Prostate gland (tissue), 2 donors: ENCODE measurements at regions of chr14 and their contacts with region 1.

Region 1: DNA sequence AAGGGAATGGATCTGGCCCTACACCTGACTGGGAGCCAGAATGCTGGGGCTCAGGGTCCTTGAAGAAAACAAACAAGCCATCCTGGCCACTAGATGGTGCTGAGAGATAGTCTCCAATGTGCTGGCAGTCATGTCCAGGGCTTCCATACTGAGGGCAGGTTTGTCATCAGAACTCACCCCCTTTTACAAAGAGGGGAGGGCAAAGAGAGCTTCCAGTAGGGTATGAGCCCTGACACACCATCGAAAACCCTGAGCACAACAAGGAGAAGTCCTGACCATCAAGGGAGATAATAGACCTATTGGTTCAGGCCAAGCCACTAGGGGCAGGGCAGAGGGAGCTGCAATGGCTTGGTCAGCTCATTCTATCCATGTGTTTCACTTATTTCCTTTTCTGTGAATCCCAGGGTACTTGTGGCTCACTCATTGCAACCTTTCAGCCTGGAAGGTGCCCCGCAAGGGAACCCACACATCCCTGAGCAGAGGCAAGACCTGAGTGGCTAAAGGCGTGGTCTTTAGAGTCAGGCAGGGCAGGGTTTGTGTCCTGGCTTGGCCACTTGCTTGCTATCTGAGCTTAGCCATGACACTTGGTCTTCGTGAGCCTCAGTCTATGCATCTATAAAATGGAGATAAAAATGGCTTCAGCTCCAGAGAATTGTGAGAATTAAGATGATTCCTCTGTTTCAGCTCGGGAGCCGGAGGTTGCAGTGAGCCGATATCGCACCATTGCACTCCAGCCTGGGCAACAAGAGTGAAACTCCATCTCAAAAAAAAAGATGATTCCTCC is 6.2 kb upstream of the PLEKHH1 start:
- DNase-seq: peak; percentile 39
- H3K4me3 ChIP-seq: no peak overlapping the region
- H3K27ac ChIP-seq: no peak overlapping the region
- H3K4me1 ChIP-seq: peaks cover 5% of the 10 kb centered on the region
- H3K27me3 ChIP-seq: no peaks in the 10 kb centered on the region
- CTCF ChIP-seq: peak; percentile 26 to 69 (median 62)
- POLR2A ChIP-seq: no peak

Region 2: DNA sequence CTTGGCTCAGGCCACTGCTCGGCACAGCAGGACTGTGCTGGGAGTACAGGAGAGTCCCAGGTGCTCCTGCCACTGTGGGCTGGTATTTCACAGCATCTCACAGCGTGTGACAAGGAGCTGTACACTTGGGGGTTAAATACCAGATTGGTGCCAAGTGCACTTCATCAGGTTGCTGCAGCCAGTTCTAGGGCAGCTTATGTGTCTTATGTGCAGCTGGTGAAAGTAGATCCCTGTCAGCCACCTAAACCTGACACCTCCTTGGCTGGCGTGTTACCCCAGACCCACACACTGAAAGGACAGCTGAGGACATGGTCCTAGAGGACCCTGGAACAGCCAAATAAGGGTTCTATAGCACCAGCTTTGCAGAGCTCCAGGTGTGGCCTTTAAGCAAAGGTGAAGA is 25.1 kb after region 1 on chr14:
- intact Hi-C with region 1: no loop called
- DNase-seq: no peak
- H3K4me3 ChIP-seq: no peak overlapping the region
- H3K27ac ChIP-seq: no peak overlapping the region
- H3K4me1 ChIP-seq: peaks cover 13% of the 10 kb centered on the region
- H3K27me3 ChIP-seq: no peaks in the 10 kb centered on the region
- CTCF ChIP-seq: no peak
- POLR2A ChIP-seq: no peak

Region 3: GRCh38 chr14:67571272-67571850 is 44.5 kb after region 1 on chr14:
- intact Hi-C with region 1: loop called (anchors 2 kb)
- DNase-seq: peak; percentile 64
- H3K4me3 ChIP-seq: no peak overlapping the region
- H3K27ac ChIP-seq: no peak overlapping the region
- H3K4me1 ChIP-seq: no peaks in the 10 kb centered on the region
- H3K27me3 ChIP-seq: no peaks in the 10 kb centered on the region
- CTCF ChIP-seq: peak; percentile 71 to 87 (median 84)
- POLR2A ChIP-seq: no peak

Region 4: GRCh38 chr14:67582061-67582460 is 55.2 kb after region 1 on chr14:
- intact Hi-C with region 1: no loop called
- DNase-seq: no peak
- H3K4me3 ChIP-seq: no peak overlapping the region
- H3K27ac ChIP-seq: no peak overlapping the region
- H3K4me1 ChIP-seq: no peaks in the 10 kb centered on the region
- H3K27me3 ChIP-seq: no peaks in the 10 kb centered on the region
- CTCF ChIP-seq: no peak
- POLR2A ChIP-seq: no peak